Activated T-helper 1 cell treated with anti-CD3 and anti-CD28 coated beads, Interleukin-12 subunit alpha, Interleukin-12 subunit beta, Interleukin-2, Interleukin-4 antibody, amounts not matched to agents 30 ng/mL and 10 ng/mL and 1 ng/mL, durations not matched to agents 14 hours and 24 hours and 36 hours (primary cell): ENCODE measurements at regions of chrX and their contacts with region 1.

Region 1: GRCh38 chrX:48521353-48522243 is at the start of gene EBP:
- DNase-seq: peak; percentile 92
- H3K4me3 Mint-ChIP-seq: peak within 1 kb of the TSS; percentile 95
- H3K27ac Mint-ChIP-seq: peak within 1 kb of the TSS; percentile 98
- H3K4me1 Mint-ChIP-seq: peaks cover 34% of the 10 kb centered on the region
- H3K27me3 Mint-ChIP-seq: no peaks in the 10 kb centered on the region
- total RNA-seq, gene EBP: 164 and 178 TPM in 2 replicates

Region 2: GRCh38 chrX:48475774-48476577 is 45.6 kb before region 1 on chrX and contains the start of gene FTSJ1:
- intact Hi-C with region 1: loop called (anchors 1 kb)
- DNase-seq: peak; percentile 86
- H3K4me3 Mint-ChIP-seq: peak within 1 kb of the TSS; percentile 98
- H3K27ac Mint-ChIP-seq: peak within 1 kb of the TSS; percentile 90
- H3K4me1 Mint-ChIP-seq: peaks cover 20% of the 10 kb centered on the region
- H3K27me3 Mint-ChIP-seq: peaks cover 2% of the 10 kb centered on the region
- total RNA-seq, gene FTSJ1: 96.2 and 103 TPM in 2 replicates

Region 3: DNA sequence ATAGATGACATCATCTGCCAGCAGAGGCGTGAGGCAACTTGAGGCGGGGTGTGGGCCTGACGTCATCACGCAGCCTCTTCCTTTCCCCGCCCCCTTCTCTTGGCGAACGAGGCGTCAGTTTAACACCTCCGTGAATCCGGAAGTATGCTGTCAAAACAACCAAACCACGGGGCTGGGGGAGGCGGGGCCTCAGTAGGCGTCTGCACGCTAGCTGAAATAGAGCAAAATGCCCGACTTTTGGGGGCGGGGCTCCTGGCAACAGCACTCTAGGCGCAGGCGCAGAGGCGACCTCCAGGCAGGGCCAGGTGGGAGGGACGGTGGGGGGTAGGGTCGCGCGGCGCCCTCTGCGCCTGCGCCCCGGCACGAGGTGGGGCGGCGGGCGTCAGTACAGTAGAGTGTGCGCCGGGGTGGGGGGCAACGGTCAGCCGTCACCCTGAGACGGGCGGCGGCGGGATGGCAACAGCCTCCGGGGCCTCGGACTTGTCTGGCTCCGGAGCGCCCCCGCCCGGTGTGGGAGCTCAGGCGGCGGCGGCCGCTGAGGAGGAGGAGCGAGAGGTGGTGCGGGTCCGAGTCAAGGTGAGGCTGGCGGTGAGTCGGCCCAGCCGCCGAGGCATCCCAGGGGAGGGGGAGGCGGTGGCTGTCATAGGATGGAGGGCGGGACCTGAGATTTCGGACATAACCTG is 17.9 kb after region 1 on chrX and contains the start of gene TBC1D25:
- intact Hi-C with region 1: loop called (anchors 1 kb)
- DNase-seq: peak; percentile 93
- H3K4me3 Mint-ChIP-seq: peak within 1 kb of the TSS; percentile 94
- H3K27ac Mint-ChIP-seq: peak within 1 kb of the TSS; percentile 92
- H3K4me1 Mint-ChIP-seq: peaks cover 17% of the 10 kb centered on the region
- H3K27me3 Mint-ChIP-seq: no peaks in the 10 kb centered on the region
- total RNA-seq, gene TBC1D25: 13.5 and 16.0 TPM in 2 replicates

Region 4: DNA sequence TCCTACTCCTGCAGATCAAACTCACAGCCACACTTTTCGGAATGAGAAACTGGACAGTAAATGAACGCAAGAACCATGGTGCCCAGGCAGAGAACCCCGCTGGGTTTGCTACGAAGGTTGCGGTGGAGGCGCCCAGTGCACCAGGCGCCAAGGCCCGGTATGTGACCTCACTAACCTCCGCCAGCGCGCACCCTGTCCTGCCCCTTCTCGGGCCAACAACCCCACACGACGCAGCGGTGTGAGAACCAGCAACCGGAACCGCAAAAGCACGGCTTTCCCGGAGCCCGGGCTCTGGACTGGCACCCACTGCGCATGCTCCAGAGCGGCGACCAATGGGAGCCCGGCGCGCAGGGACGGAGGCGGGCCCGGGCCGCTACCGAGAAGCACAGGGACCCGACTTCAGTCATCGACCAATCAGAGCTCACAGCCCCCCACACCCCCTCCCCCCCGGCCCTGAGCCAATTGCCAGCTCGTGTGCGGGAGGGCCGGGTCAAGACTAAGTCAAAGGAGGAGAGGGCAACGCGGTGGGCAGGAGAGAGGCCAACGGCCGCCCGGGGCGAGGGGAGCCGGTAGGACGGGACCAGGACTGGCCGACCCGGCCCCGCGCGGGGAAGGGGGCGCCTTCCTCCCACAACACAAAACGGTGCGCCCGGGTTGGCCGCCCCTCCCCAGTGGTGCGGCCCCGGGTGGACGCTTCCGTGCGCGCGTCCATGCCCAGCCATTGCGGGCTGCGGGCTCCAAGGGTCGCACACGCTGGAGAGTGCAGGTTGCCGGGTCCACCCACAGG is 154.7 kb after region 1 on chrX:
- intact Hi-C with region 1: loop called (anchors 10 kb)
- DNase-seq: peak; percentile 87
- H3K4me3 Mint-ChIP-seq: peak overlapping the region; percentile 86
- H3K27ac Mint-ChIP-seq: peak overlapping the region; percentile 88
- H3K4me1 Mint-ChIP-seq: peaks cover 20% of the 10 kb centered on the region
- H3K27me3 Mint-ChIP-seq: no peaks in the 10 kb centered on the region